ENCODE measurements at regions of chr19 and their contacts with region 1.

Region 1: DNA sequence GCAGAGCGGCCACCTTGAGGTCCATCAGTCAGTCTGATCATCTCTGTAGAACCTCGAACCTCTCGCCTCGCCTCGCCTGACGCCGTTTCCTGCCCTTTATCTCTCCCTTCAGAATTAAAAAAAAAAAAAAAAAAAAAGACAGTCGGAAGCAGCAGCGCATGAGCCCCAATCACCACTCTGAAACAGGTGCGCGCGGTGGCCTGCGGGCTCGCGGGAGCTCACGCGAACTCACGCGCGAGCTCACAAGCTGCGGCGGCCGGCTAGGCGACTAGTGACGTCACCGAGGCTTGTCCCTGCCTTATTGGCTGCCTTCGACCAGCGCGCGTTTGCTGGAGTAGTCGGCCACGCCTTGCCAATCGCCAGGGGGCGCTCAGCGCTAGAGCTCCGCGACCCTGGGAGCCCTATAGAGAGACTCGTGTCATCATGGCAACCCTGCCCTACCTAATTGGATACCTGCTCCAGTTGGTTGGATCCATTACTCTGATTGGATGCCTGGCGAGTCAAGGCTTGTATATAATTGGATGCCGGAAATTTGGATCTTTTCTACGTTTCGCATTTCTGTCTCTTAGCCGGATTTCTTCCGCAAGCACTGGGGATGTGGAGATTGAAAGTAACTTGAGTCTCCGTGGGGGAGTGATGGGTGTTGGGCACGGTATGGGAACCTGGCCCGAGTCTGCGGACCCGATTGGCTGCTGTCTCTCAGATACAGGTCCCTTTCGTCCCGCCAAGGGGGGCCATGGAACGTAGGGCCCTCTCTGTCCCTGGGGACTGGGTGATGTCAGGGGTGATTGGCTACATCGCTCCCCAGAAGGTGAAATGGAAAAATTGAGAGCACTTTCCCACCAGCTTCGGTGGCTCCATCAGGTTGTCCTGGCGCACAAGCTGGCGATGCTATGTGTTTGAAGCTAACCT is 31.6 kb downstream of the SYT3 start:
- DNase-seq: peak; percentile 100
- ATAC-seq: peak; percentile 84
- H3K4me3 Mint-ChIP-seq: peak overlapping the region; percentile 62
- H3K27ac Mint-ChIP-seq: peak overlapping the region; percentile 83
- H3K4me1 Mint-ChIP-seq: peaks cover 12% of the 10 kb centered on the region; the same call in 1 of the 2 replicates
- H3K27me3 Mint-ChIP-seq: peaks cover 74% of the 10 kb centered on the region
- CTCF ChIP-seq: peak; percentile 66

Region 2: DNA sequence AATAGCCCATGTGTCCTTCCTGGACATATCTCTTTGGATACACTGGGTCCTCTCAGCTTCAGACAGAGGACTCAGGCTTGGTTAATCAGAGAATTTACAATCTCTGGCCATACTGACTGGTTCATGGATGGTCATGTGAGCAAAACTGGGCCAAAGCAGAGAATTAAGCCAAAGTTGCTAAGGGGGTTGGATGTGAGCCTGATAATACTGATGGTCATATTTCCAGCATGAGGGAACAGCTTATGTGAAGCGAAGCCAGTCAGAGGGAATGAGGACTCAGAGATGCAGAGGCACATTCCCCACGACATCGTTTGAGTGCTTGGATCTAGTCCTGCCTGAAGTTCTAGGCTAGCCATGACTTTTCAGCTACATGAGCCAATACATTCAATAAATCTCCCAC is 17.9 kb before region 1 on chr19:
- CTCF ChIA-PET with region 1: interaction called, 14 read pairs
- POLR2A ChIA-PET with region 1: no interaction called
- DNase-seq: no peak
- ATAC-seq: no peak
- H3K4me3 Mint-ChIP-seq: no peak overlapping the region
- H3K27ac Mint-ChIP-seq: no peak overlapping the region
- H3K4me1 Mint-ChIP-seq: peaks cover 11% of the 10 kb centered on the region
- H3K27me3 Mint-ChIP-seq: peaks cover 35% of the 10 kb centered on the region
- CTCF ChIP-seq: no peak

Region 3: GRCh38 chr19:50663482-50663790 is 55.3 kb after region 1 on chr19:
- CTCF ChIA-PET with region 1: interaction called, 10 read pairs
- POLR2A ChIA-PET with region 1: no interaction called
- DNase-seq: no peak
- ATAC-seq: no peak
- H3K4me3 Mint-ChIP-seq: no peak overlapping the region
- H3K27ac Mint-ChIP-seq: no peak overlapping the region
- H3K4me1 Mint-ChIP-seq: peaks cover 16% of the 10 kb centered on the region
- H3K27me3 Mint-ChIP-seq: peaks cover 60% of the 10 kb centered on the region
- CTCF ChIP-seq: no peak

Region 4: DNA sequence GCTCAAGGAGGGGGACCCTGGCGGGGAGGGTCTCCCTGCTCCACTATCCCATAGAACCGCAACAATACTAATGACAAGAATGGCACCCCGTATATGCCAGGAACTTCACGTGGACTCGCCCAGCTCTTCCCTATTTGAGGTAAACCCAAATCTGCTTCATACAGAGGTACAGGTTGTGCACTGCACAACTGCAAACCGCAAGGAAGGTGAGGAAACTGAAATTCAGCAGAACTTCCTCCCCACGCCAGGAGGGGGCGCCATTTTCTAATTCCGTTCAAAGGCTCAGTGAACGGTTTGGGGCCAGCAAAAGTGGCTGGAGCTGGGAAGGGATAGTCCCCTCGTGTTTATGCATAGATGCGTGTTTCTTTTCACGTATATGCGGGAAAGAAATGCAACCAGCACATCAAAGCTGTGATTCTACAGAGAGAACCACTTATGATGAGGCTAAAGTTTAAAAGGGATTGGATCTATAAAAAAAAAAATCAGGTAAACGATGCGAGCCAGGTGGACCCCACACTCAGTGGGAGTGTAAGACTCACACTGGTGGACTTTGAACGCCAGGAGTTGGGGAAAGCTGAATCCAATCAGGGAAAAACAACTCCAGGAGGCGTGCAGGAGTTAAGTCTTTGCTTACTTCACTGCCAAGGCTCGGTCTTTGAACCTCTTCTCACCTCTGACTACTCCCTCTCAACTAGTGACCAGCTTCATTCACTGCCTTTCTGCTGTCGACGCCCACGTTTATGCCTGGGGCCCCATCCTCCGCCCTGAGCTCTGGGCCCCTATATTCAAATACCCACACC is 61.4 kb after region 1 on chr19:
- CTCF ChIA-PET with region 1: interaction called, 13 read pairs
- POLR2A ChIA-PET with region 1: no interaction called
- DNase-seq: no peak
- ATAC-seq: no peak
- H3K4me3 Mint-ChIP-seq: peak overlapping the region; percentile 47
- H3K27ac Mint-ChIP-seq: no peak overlapping the region
- H3K4me1 Mint-ChIP-seq: peaks cover 23% of the 10 kb centered on the region
- H3K27me3 Mint-ChIP-seq: peaks cover 86% of the 10 kb centered on the region
- CTCF ChIP-seq: peak; percentile 95

Region 5: GRCh38 chr19:50705422-50706019 is 97.4 kb after region 1 on chr19:
- CTCF ChIA-PET with region 1: interaction called, 19 read pairs
- POLR2A ChIA-PET with region 1: no interaction called
- DNase-seq: peak; percentile 62
- ATAC-seq: peak; percentile 82
- H3K4me3 Mint-ChIP-seq: no peak overlapping the region
- H3K27ac Mint-ChIP-seq: no peak overlapping the region
- H3K4me1 Mint-ChIP-seq: peaks cover 9% of the 10 kb centered on the region; the same call in 1 of the 2 replicates
- H3K27me3 Mint-ChIP-seq: peaks cover 38% of the 10 kb centered on the region
- CTCF ChIP-seq: peak; percentile 37

Region 6: GRCh38 chr19:50777754-50778303 is 169.7 kb after region 1 on chr19:
- CTCF ChIA-PET with region 1: interaction called, 15 read pairs
- POLR2A ChIA-PET with region 1: no interaction called
- DNase-seq: peak; percentile 71
- ATAC-seq: peak; percentile 54
- H3K4me3 Mint-ChIP-seq: peak overlapping the region; percentile 59
- H3K27ac Mint-ChIP-seq: 0 out of 2 replicates have a peak overlapping the region, but pooled peaks have one; percentile 51
- H3K4me1 Mint-ChIP-seq: peaks cover 24% of the 10 kb centered on the region
- H3K27me3 Mint-ChIP-seq: peaks cover 95% of the 10 kb centered on the region
- CTCF ChIP-seq: no peak

Measured in WTC11 (cell line).